Lower leg skin (tissue), 4 donors: ENCODE measurements at regions of chr3 and their contacts with region 1.

Region 1: GRCh38 chr3:70815817-70816216 is 503.4 kb upstream of the MDFIC2 start:
- DNase-seq: no peak
- H3K4me3 ChIP-seq: no peak overlapping the region
- CTCF ChIP-seq: no peak
- POLR2A ChIP-seq: no peak

Region 2: GRCh38 chr3:70840106-70840875 is 24.5 kb after region 1 on chr3:
- intact Hi-C with region 1: loop called (anchors 2 kb)
- DNase-seq: no peak
- H3K4me3 ChIP-seq: no peak overlapping the region
- CTCF ChIP-seq: no peak
- POLR2A ChIP-seq: no peak